GM10248 (cell line): ENCODE measurements at regions of chr7 and their contacts with region 1.

Region 1: DNA sequence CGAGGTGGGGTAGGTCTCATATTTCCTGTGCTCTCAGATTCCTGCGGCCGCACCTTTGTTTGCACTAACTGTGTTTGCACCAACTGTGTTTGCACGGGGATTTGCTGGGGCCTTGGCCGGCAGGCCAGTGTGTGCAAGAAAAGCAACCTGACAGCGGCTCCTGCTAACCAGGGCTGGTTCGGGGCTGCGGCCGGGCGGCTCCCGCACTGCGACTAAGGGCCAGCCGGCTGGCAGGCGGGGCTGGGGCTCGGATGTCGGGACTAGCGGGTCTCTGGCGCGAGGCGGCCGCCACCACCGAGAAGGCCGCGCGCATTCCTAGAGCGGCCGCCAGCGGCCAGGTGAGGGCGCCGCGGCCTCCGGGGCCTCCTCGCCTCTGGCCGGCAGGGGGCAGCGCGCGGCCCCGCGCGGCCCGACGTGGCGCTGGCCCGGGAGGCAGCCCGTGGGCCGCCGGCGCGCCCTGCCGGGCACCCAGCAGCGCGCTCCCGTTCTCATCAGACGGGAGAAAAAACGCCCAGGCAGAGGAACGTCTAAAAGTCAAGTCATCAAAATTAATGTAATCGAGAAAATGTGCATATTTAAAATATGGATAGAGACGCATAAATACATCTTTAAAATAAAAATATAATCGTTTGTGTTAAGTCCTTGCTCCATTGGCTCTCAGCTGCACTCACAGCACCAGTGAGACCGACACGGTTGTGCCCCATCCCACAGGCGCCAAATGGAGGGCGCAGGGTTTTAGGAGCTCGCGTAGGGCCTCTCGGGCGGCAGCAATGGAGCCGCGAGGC is 38.5 kb downstream of the ZNF777 start:
- DNase-seq: peak; percentile 95
- CTCF ChIP-seq: peak; percentile 97

Region 2: GRCh38 chr7:149133028-149133705 is 289.2 kb before region 1 on chr7:
- CTCF ChIA-PET with region 1: no interaction called
- POLR2A ChIA-PET with region 1: no interaction called
- DNase-seq: no peak
- CTCF ChIP-seq: no peak

Region 3: DNA sequence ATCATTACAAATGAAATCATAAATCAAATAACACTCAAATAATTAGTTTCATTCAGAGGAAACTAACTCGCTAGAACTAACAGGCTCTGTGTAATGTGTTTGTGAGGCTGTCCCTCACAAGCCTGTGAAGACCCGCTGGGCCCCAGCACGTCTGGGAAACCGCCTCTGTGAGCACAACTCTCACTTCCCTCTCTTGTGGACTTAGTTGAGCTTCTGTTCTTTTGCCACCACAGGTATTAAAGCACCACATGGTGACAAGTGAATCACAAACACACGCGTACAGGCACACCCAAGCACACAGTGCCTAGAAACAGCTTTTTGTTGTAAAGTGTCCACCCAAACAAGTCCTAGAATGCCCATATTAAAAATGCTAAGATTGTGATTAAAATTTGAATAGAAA is 12.4 kb before region 1 on chr7:
- CTCF ChIA-PET with region 1: interaction called, 26 read pairs
- POLR2A ChIA-PET with region 1: no interaction called
- DNase-seq: peak; percentile 54
- CTCF ChIP-seq: no peak

Region 4: GRCh38 chr7:149460493-149461277 is 38.4 kb after region 1 on chr7 and contains the start of gene ZNF777:
- CTCF ChIA-PET with region 1: interaction called, 17 read pairs
- POLR2A ChIA-PET with region 1: no interaction called
- DNase-seq: peak; percentile 92
- CTCF ChIP-seq: peak; percentile 78

Region 5: GRCh38 chr7:149569025-149569725 is 146.9 kb after region 1 on chr7:
- CTCF ChIA-PET with region 1: no interaction called
- POLR2A ChIA-PET with region 1: no interaction called
- DNase-seq: no peak
- CTCF ChIP-seq: no peak